Activated B cell treated with CpG ODN at 0.5 μM for 24 hours (primary cell): ENCODE measurements at regions of chr22 and their contacts with region 1.

Region 1: GRCh38 chr22:41448189-41448808 is 1.7 kb upstream of the TOB2 start:
- DNase-seq: peak; percentile 77
- ATAC-seq: peak; percentile 64
- H3K4me3 Mint-ChIP-seq: peak overlapping the region; percentile 95
- H3K27ac Mint-ChIP-seq: peak overlapping the region; percentile 98
- H3K4me1 Mint-ChIP-seq: peaks cover 20% of the 10 kb centered on the region
- H3K27me3 Mint-ChIP-seq: no peaks in the 10 kb centered on the region
- CTCF ChIP-seq: no peak

Region 2: DNA sequence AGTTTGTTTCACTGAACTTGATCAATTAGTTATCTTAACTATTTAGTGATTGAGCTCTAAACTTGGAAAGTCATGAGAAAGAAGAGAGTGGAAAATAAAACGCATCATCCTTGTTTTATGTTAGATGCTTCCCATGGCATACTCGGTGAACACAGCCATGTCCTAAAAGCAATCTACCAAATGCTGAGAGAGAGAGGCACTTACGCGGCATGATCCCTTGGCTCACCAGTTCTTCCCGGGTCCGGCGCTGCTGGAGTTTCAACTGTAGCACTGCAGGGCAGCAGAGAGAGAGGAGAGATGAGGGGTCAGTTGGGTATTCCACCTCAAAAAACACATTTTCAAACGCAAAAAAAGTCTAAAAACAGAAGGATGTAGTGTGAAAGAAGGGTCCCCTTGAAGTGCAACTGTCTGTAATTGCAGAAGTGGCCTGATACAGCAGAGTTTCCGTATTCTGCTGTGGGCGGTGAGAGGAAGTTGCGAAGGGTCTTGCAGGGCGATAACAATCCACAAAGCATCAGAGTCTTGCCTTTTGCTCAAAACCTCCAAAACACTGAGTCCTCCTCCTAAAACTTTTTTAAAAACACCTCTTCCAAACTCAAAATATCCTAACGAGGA is 985.2 kb before region 1 on chr22:
- CTCF ChIA-PET with region 1: no interaction called
- POLR2A ChIA-PET with region 1: interaction called, 14 read pairs
- intact Hi-C with region 1: no loop called
- DNase-seq: peak; percentile 24
- ATAC-seq: peak; percentile 89
- H3K4me3 Mint-ChIP-seq: peak overlapping the region; percentile 99
- H3K27ac Mint-ChIP-seq: peak overlapping the region; percentile 98
- H3K4me1 Mint-ChIP-seq: peaks cover 63% of the 10 kb centered on the region
- H3K27me3 Mint-ChIP-seq: no peaks in the 10 kb centered on the region
- CTCF ChIP-seq: no peak

Region 3: GRCh38 chr22:41381329-41382097 is 66.8 kb before region 1 on chr22 and contains the start of gene TEF:
- CTCF ChIA-PET with region 1: no interaction called
- POLR2A ChIA-PET with region 1: interaction called, 72 read pairs
- intact Hi-C with region 1: loop called (anchors 1 kb)
- DNase-seq: peak; percentile 95
- ATAC-seq: peak; percentile 84
- H3K4me3 Mint-ChIP-seq: peak within 1 kb of the TSS; percentile 91
- H3K27ac Mint-ChIP-seq: peak within 1 kb of the TSS; percentile 98
- H3K4me1 Mint-ChIP-seq: peaks cover 24% of the 10 kb centered on the region
- H3K27me3 Mint-ChIP-seq: no peaks in the 10 kb centered on the region
- CTCF ChIP-seq: no peak
- total RNA-seq, gene TEF: 5.1 and 5.2 TPM in 2 replicates

Region 4: DNA sequence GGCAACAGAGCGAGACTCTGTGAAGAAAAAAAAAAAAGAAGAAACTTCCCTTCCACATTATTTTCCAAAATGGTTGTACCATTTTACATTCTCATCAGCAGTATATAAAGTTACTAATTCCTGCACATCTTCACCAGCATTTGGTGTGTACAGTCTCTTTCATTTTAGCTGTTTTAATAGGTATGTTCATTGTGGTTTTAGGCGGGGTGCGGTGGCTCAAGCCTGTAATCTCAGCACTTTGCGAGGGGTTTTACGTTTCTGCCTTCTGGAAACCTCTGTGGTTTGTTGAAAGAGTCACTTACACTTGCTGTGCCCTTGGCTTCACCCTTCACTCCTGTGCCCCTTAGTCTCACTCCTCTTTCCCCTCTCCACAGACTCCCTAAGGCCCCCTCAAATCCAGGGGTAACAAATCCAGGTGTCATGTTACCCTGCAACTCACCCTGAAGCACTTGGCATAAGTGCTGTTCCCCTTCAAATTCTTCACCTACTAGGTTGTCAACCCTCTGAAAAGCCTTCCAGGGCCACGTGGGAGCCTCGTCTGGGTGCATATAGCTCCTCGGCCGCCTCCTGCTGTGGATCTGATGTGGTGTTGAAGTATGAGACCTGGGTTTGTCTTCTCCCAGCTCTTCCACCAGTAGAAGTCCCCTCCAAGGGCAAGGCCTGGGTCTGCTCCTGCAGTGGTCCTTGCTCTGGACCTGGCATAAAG is 22.5 kb before region 1 on chr22:
- CTCF ChIA-PET with region 1: interaction called, 3 read pairs
- POLR2A ChIA-PET with region 1: interaction called, 46 read pairs
- intact Hi-C with region 1: loop called (anchors 2 kb)
- DNase-seq: no peak
- ATAC-seq: peak; percentile 63
- H3K4me3 Mint-ChIP-seq: peak overlapping the region; percentile 25
- H3K27ac Mint-ChIP-seq: peak overlapping the region; percentile 73
- H3K4me1 Mint-ChIP-seq: peaks cover 46% of the 10 kb centered on the region
- H3K27me3 Mint-ChIP-seq: no peaks in the 10 kb centered on the region
- CTCF ChIP-seq: no peak

Region 5: DNA sequence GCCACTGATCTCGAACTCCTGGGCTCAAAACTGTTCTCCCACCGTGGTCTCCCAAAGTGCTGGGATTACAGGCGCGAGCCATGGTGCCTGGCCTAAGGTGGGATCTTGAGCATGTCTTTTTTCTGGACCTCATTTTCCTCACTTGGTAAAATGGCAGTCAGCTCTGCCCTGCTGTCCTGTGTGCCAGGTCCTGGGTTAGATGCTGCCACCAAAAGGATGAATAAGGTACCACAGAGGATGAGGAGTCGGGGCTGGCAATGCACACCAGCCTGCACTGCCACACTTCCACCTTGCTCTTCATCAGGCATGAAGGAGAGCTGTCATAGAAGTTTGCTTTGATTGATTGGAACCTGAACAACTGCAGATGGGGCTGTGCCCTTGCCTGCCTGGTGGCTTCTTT is 52.9 kb after region 1 on chr22:
- CTCF ChIA-PET with region 1: interaction called, 19 read pairs
- POLR2A ChIA-PET with region 1: interaction called, 86 read pairs
- intact Hi-C with region 1: loop called (anchors 1 kb)
- DNase-seq: no peak
- ATAC-seq: peak; percentile 88
- H3K4me3 Mint-ChIP-seq: no peak overlapping the region
- H3K27ac Mint-ChIP-seq: peak overlapping the region; percentile 83
- H3K4me1 Mint-ChIP-seq: peaks cover 47% of the 10 kb centered on the region
- H3K27me3 Mint-ChIP-seq: no peaks in the 10 kb centered on the region
- CTCF ChIP-seq: no peak

Region 6: DNA sequence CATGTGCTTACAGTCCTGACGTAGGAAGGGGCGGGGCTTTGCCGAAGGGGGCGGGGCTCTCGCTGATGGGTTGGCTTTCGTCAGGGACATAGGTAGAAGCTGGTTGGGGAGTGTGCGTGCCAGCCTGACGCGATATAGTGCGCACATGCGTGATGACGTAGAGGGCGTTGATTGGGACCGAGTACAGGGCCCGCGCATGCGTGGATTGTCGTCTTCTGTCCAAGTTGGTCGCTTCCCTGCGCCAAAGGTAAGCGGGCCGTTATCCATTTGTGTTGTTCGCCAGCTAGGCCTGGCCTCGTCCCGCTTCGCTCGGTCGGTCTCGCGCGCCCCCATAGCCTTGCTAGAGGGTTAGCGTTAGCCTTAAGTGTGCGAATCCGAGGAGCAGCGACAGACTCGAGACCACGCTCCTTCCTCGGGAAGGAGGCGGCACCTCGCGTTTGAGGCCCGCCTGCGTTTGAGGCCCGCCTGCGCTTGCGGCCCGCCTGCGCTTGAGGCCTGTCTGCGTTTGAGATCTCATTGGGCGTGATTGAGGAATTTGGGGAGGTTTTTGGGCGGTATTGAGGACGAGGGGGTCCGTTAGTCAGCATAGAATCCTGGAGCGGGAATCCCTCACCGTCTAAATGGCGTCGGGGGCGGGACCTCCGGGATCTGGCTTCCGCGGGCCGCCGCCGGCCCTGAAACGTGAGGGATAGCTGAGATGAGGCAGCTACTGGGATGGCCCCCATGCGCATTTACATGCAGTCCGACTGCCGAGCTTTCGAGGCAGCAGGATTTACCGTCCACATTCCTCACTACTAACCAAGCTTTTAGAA is 173.0 kb after region 1 on chr22 and contains the start of gene XRCC6:
- CTCF ChIA-PET with region 1: no interaction called
- POLR2A ChIA-PET with region 1: interaction called, 22 read pairs
- intact Hi-C with region 1: loop called (anchors 1 kb)
- DNase-seq: peak; percentile 99
- ATAC-seq: peak; percentile 92
- H3K4me3 Mint-ChIP-seq: peak within 1 kb of the TSS; percentile 98
- H3K27ac Mint-ChIP-seq: peak within 1 kb of the TSS; percentile 98
- H3K4me1 Mint-ChIP-seq: peaks cover 38% of the 10 kb centered on the region
- H3K27me3 Mint-ChIP-seq: no peaks in the 10 kb centered on the region
- CTCF ChIP-seq: no peak
- total RNA-seq, gene XRCC6: 297 and 319 TPM in 2 replicates